Testis (tissue), 5 donors: ENCODE measurements at regions of chr10 and their contacts with region 1.

Region 1: GRCh38 chr10:4849555-4850242 is 23.7 kb downstream of the AKR1E2 start:
- DNase-seq: peak; percentile 96
- H3K4me3 ChIP-seq: no peak overlapping the region
- H3K27ac ChIP-seq: peak overlapping the region; percentile 26 to 80
- H3K4me1 ChIP-seq: peaks cover 30% of the 10 kb centered on the region
- H3K27me3 ChIP-seq: no peaks in the 10 kb centered on the region
- CTCF ChIP-seq: peak; percentile 98 to 100 (median 100)
- POLR2A ChIP-seq: no peak

Region 2: GRCh38 chr10:4981722-4982471 is 132.2 kb after region 1 on chr10:
- intact Hi-C with region 1: loop called (anchors 10 kb)
- DNase-seq: peak; percentile 77
- H3K4me3 ChIP-seq: no peak overlapping the region
- H3K27ac ChIP-seq: peak overlapping the region; percentile 74 to 85
- H3K4me1 ChIP-seq: peaks cover 24% of the 10 kb centered on the region
- H3K27me3 ChIP-seq: no peaks in the 10 kb centered on the region
- CTCF ChIP-seq: peak in 2 of 3 experiments; percentile 56 to 65
- POLR2A ChIP-seq: no peak

Region 3: GRCh38 chr10:5094265-5095205 is 244.8 kb after region 1 on chr10 and contains the start of gene AKR1C3:
- intact Hi-C with region 1: loop called (anchors 5 kb)
- DNase-seq: no peak
- H3K4me3 ChIP-seq: peak within 1 kb of the TSS; percentile 49 to 57
- H3K27ac ChIP-seq: peak within 1 kb of the TSS in 1 of 2 donors; percentile 85
- H3K4me1 ChIP-seq: no peaks in the 10 kb centered on the region
- H3K27me3 ChIP-seq: no peaks in the 10 kb centered on the region
- CTCF ChIP-seq: peak; percentile 73 to 92 (median 82)
- POLR2A ChIP-seq: no peak
- total RNA-seq, gene AKR1C3: 15.2 to 15.6 TPM